CD4-positive, alpha-beta T cell (primary cell): ENCODE measurements at regions of chr7 and their contacts with region 1.

Region 1: GRCh38 chr7:107743567-107744344 is at the start of gene CBLL1:
- DNase-seq: peak; percentile 94 to 98 (median 97)
- ATAC-seq: peak; percentile 90
- H3K4me3 ChIP-seq: peak within 1 kb of the TSS; percentile 87
- H3K4me3 Mint-ChIP-seq: peak within 1 kb of the TSS; percentile 93
- H3K27ac ChIP-seq: peak within 1 kb of the TSS; percentile 99
- H3K27ac Mint-ChIP-seq: peak within 1 kb of the TSS; percentile 99
- H3K4me1 ChIP-seq: peaks cover 15% of the 10 kb centered on the region
- H3K4me1 Mint-ChIP-seq: peaks cover 55% of the 10 kb centered on the region
- H3K27me3 ChIP-seq: no peaks in the 10 kb centered on the region
- H3K27me3 Mint-ChIP-seq: no peaks in the 10 kb centered on the region
- CTCF ChIP-seq: peak; percentile 68
- total RNA-seq, gene CBLL1: 77.8 to 80.2 TPM

Region 2: DNA sequence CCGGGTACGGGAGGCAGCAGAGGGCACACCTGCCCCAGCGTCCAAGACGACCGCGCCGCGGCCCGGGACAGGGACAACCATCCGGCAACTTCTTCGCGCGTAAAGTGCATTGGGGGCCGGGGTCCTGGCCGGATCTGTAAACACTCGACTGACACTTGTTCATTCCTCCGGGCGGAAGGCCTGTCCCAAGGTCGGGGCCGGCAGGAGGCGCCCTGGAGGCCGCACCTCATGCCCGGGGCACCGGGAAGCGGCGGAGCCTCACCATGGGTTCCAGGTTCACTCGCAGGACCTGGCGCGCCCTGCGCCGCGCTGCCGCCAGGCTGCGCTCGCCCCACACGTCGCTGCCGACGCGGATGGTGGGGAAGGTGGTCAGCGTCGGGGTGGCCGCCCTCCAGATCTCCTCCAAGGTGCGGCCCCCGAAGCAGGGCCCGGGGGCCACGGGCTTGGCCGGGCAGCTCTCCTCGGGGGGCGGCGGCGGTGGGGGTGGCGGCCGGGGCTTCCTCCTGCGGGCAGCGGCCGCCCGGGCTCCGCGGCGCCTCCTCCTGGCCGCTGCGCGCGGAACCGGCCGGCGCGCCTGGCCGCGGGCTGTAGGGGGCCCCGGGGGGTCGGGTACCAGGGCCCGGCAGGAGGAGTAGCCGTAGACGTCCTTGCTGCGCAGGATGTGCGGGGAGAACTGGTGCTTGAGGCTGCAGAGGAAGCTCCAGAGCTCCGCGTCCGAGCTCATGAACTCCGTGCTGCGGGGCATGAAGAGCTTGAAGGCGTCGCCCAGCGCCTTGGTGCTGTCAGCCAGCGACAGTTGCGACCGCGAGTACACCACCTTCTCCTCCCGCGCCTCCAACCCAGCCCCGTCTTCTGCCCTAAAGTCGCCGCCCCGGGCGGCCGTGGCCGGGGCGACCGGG is 1083.5 kb before region 1 on chr7:
- CTCF ChIA-PET with region 1: no interaction called
- POLR2A ChIA-PET with region 1: interaction called, 3 read pairs
- intact Hi-C with region 1: loop called in 1 of 2 experiments (anchors 10 kb)
- DNase-seq: peak; percentile 58 to 91 (median 72)
- ATAC-seq: peak; percentile 58
- H3K4me3 ChIP-seq: peak overlapping the region; percentile 71
- H3K4me3 Mint-ChIP-seq: peak overlapping the region; percentile 96
- H3K27ac ChIP-seq: peak overlapping the region; percentile 44 to 71
- H3K27ac Mint-ChIP-seq: peak overlapping the region; percentile 92
- H3K4me1 ChIP-seq: peaks cover 20% of the 10 kb centered on the region
- H3K4me1 Mint-ChIP-seq: peaks cover 40% of the 10 kb centered on the region
- H3K27me3 ChIP-seq: no peaks in the 10 kb centered on the region
- H3K27me3 Mint-ChIP-seq: no peaks in the 10 kb centered on the region
- CTCF ChIP-seq: peak; percentile 78

Region 3: GRCh38 chr7:107563775-107564552 is 179.8 kb before region 1 on chr7 and contains the starts of genes COG5 and DUS4L:
- CTCF ChIA-PET with region 1: interaction called, 4 read pairs
- POLR2A ChIA-PET with region 1: interaction called, 22 read pairs
- intact Hi-C with region 1: loop called (anchors 2 to 10 kb)
- DNase-seq: peak; percentile 69 to 94 (median 80)
- ATAC-seq: peak; percentile 85
- H3K4me3 ChIP-seq: peak within 1 kb of the TSS; percentile 83
- H3K4me3 Mint-ChIP-seq: peak within 1 kb of the TSS; percentile 93
- H3K27ac ChIP-seq: peak within 1 kb of the TSS; percentile 87 to 90
- H3K27ac Mint-ChIP-seq: peak within 1 kb of the TSS; percentile 94
- H3K4me1 ChIP-seq: peaks cover 35% of the 10 kb centered on the region
- H3K4me1 Mint-ChIP-seq: peaks cover 70% of the 10 kb centered on the region
- H3K27me3 ChIP-seq: no peaks in the 10 kb centered on the region
- H3K27me3 Mint-ChIP-seq: no peaks in the 10 kb centered on the region
- CTCF ChIP-seq: no peak
- total RNA-seq, gene COG5: 43.4 to 44.5 TPM
- total RNA-seq, gene DUS4L: 14.3 to 14.4 TPM

Region 4: DNA sequence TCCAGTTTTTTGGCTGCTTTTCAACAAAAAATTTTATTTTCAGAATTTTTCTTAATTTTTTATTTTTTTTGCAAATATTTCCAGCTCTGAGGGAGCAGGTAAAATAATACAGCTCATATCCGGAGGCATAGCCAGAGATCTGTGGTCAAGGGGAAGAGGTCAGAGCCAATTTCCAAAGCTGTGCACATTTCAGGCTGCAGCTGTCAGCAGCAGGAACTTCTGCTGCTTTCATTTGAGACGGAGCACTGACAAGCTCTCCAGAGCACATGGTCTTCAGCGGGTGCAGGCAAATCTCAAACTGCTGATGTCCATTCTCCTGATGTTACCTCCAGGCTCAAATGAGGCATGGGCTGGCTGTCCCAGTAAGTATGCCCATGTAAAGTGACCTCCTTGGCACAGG is 52.0 kb before region 1 on chr7:
- CTCF ChIA-PET with region 1: no interaction called
- POLR2A ChIA-PET with region 1: no interaction called
- intact Hi-C with region 1: no loop called
- DNase-seq: no peak
- ATAC-seq: no peak
- H3K4me3 ChIP-seq: no peak overlapping the region
- H3K4me3 Mint-ChIP-seq: no peak overlapping the region
- H3K27ac ChIP-seq: no peak overlapping the region
- H3K27ac Mint-ChIP-seq: no peak overlapping the region
- H3K4me1 ChIP-seq: no peaks in the 10 kb centered on the region
- H3K4me1 Mint-ChIP-seq: no peaks in the 10 kb centered on the region
- H3K27me3 ChIP-seq: peaks cover 0 to 7% of the 10 kb centered on the region in 2 experiments
- H3K27me3 Mint-ChIP-seq: peaks cover 18% of the 10 kb centered on the region
- CTCF ChIP-seq: no peak

Region 5: GRCh38 chr7:107768272-107768671 is 24.5 kb after region 1 on chr7:
- CTCF ChIA-PET with region 1: no interaction called
- POLR2A ChIA-PET with region 1: interaction called, 11 read pairs
- intact Hi-C with region 1: no loop called
- DNase-seq: no peak
- ATAC-seq: no peak
- H3K4me3 ChIP-seq: no peak overlapping the region
- H3K4me3 Mint-ChIP-seq: no peak overlapping the region
- H3K27ac ChIP-seq: no peak overlapping the region
- H3K27ac Mint-ChIP-seq: no peak overlapping the region
- H3K4me1 ChIP-seq: no peaks in the 10 kb centered on the region
- H3K4me1 Mint-ChIP-seq: peaks cover 17% of the 10 kb centered on the region
- H3K27me3 ChIP-seq: no peaks in the 10 kb centered on the region
- H3K27me3 Mint-ChIP-seq: no peaks in the 10 kb centered on the region
- CTCF ChIP-seq: no peak

Region 6: DNA sequence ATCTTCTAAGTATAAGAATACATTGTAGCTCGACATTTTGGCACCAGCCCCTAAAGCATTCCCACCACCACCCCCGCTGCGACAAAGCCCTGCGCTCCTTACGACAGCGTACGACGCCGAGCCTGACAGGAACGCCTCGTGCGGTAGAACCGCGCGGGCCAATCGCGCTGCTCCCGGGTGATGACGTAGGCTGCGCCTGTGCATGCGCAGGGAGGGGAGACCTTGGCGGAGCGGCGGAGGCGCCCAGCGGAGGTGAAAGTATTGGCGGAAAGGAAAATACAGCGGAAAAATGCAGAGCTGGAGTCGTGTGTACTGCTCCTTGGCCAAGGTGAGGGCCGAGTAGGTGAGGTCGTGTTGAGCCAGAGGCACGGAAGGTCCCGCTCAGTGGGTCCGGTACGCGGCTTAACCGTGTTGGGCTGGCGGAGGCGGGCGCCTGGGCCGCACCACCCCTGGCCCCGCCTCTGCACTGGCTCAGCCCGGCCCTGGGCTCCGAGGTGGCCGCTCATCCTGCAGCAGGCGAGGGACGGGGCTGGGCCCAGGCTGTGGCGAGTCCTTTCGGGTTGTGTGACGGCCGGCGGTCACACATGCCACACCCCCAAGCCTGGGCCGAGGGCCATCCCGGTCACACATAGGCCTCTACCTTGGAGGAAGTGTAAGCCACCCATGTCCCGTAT is 147.3 kb after region 1 on chr7 and contains the start of gene DLD:
- CTCF ChIA-PET with region 1: interaction called, 13 read pairs
- POLR2A ChIA-PET with region 1: interaction called, 41 read pairs
- intact Hi-C with region 1: no loop called
- DNase-seq: peak; percentile 84 to 97 (median 90)
- ATAC-seq: peak; percentile 96
- H3K4me3 ChIP-seq: peak within 1 kb of the TSS; percentile 78
- H3K4me3 Mint-ChIP-seq: peak within 1 kb of the TSS; percentile 99
- H3K27ac ChIP-seq: peak within 1 kb of the TSS; percentile 85 to 89
- H3K27ac Mint-ChIP-seq: peak within 1 kb of the TSS; percentile 95
- H3K4me1 ChIP-seq: peaks cover 27% of the 10 kb centered on the region
- H3K4me1 Mint-ChIP-seq: peaks cover 54% of the 10 kb centered on the region
- H3K27me3 ChIP-seq: no peaks in the 10 kb centered on the region
- H3K27me3 Mint-ChIP-seq: no peaks in the 10 kb centered on the region
- CTCF ChIP-seq: no peak
- total RNA-seq, gene DLD: 74.3 to 74.9 TPM